Panc1 (cell line): ENCODE measurements at regions of chr17 and their contacts with region 1.

Region 1: GRCh38 chr17:39116224-39116623 is 35.2 kb downstream of the PLXDC1 start:
- DNase-seq: no peak
- ATAC-seq: no peak
- H3K4me3 ChIP-seq: no peak overlapping the region
- H3K27ac ChIP-seq: no peak overlapping the region
- H3K4me1 ChIP-seq: no peaks in the 10 kb centered on the region
- H3K27me3 ChIP-seq: no peaks in the 10 kb centered on the region
- CTCF ChIP-seq: no peak

Region 2: DNA sequence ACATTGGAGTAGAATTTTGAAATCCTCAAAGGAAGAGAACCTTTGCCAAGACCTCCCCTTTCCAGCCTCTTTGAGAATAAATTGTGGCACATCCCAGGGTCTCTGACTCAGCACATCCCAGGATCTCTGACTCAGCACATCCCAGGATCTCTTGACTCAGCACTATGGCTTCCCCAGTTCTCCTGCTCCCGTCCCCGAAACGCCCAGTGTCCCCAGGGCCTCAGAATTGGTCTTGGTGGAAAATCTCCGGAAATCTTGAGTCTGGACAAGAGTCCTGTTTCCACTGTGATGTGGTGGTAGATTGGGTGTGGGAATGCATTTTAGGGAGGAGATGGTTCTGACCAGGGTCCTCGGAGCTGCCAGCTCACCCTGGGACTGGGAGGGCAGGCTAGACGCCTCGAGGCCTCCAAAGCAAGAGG is 16.0 kb after region 1 on chr17:
- CTCF ChIA-PET with region 1: no interaction called
- POLR2A ChIA-PET with region 1: no interaction called
- in situ Hi-C with region 1: no loop called
- intact Hi-C with region 1: no loop called
- DNase-seq: no peak
- ATAC-seq: no peak
- H3K4me3 ChIP-seq: no peak overlapping the region
- H3K27ac ChIP-seq: no peak overlapping the region
- H3K4me1 ChIP-seq: no peaks in the 10 kb centered on the region
- H3K27me3 ChIP-seq: no peaks in the 10 kb centered on the region
- CTCF ChIP-seq: no peak

Region 3: GRCh38 chr17:39147221-39148185 is 31.3 kb after region 1 on chr17:
- CTCF ChIA-PET with region 1: interaction called, 11 read pairs
- POLR2A ChIA-PET with region 1: no interaction called
- in situ Hi-C with region 1: no loop called
- intact Hi-C with region 1: no loop called
- DNase-seq: no peak
- ATAC-seq: no peak
- H3K4me3 ChIP-seq: no peak overlapping the region
- H3K27ac ChIP-seq: no peak overlapping the region
- H3K4me1 ChIP-seq: peaks cover 4% of the 10 kb centered on the region; the same call in 1 of the 2 replicates
- H3K27me3 ChIP-seq: no peaks in the 10 kb centered on the region
- CTCF ChIP-seq: no peak